ENCODE measurements at regions of chr5 and their contacts with region 1.

Region 1: GRCh38 chr5:142717582-142718215 is 31.8 kb upstream of the FGF1 start:
- DNase-seq: no peak

Region 2: GRCh38 chr5:142611154-142611553 is 106.5 kb before region 1 on chr5:
- intact Hi-C with region 1: no loop called
- DNase-seq: no peak

Region 3: GRCh38 chr5:142769741-142770631 is 52.3 kb after region 1 on chr5 and contains the start of gene ARHGAP26:
- intact Hi-C with region 1: loop called (anchors 2 kb)
- DNase-seq: peak; percentile 100
- total RNA-seq, gene ARHGAP26: 32.0 TPM

Region 4: GRCh38 chr5:142869883-142870282 is 152.2 kb after region 1 on chr5:
- intact Hi-C with region 1: no loop called
- DNase-seq: no peak

Region 5: DNA sequence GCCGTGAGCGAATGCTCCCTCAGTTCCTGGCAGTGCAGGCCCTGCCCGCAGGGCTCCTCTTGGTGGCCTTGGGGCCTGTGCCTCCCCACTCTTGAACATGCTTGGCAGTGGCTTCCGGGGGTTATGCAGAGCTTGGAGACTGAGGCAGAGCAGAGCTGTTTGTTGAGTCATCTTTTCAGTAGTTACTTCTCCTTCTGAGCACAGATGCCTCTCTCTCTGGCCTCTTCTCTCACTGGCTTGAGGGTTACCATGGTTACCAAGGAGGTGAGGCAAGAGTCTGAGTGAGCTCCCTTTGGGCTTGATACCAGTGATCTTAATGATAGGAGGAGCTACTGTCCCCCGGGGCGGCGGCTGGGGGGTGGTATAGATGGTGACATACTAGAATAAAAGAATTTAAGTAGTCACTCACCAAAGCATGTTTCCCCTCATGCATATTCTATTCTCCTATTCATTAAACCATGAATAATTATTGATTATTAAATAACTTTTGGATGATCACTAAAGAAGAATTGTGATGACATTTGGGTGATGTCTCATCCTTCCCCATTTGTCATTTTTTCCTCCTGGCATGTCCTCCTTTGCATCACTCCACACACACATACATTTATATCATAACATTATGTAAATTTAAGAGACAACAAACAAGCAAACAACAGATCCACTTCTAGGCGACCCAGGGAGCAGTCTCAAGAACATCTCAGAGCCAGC is 163.5 kb after region 1 on chr5:
- intact Hi-C with region 1: loop called (anchors 2 kb)
- DNase-seq: no peak